GM18951 (cell line): ENCODE measurements at regions of chr3 and their contacts with region 1.

Region 1: DNA sequence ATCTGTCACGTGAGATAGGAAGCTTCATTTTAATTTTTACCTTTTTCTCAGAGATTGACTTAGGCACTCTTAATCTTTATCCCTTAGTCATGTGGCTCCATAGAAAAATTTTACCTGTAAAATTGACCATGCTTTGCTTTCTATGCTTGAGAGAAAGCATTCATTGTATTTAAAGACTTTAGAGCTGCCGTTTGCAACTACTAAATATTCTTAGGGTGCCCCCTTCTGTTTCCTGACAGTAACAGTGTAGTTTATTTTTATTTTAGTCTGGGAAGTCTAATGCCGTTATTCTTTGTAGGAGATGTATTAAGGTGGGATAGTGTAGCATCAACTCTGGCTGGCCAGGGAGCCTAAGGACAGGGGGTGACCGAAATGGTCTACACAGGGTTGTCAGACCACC is 84.5 kb upstream of the SYNPR start:
- POLR2A ChIP-seq: no peak

Region 2: DNA sequence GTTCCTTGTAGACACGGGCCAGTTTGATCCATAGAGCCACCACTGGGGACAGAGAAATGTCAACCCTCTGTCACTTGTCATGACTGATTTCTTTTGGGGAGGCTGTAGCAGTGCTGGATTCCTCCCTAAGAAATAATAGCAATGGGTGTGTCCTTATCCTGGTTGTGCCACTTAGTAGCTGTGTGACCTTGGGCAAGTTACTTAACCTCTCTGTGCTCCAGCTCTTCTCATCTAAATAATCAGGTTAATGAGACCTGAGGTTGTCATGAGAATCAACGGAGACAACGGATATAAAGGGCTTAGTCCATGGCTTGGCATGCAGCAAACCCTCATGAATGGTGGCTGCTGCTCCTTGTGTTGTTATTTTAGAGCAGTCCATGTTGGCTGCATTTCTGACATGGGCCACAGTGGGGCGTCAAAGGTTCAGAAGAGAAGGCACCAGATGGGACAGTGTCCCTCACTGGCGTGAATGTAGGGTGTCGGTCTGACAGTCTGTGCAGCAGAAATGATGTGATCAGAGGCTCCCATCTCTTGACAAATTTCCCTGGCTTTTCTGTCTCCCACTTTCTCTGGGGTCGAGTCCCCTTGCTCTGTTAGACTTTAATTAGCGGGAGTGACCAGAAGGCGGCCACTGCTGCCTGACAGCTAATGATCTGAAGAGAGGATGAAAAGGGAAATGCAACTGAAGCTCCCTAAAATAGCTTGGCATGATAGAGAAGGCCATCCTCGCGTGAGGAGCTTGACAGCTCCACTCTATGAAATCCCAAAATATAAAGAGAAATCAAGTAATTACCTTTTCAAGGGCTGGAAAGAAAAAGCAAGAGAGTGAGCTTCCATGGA is 527.8 kb before region 1 on chr3:
- in situ Hi-C with region 1: loop called (anchors 25 kb)
- POLR2A ChIP-seq: no peak